ENCODE measurements at regions of chr5 and their contacts with region 1.

Region 1: GRCh38 chr5:83076742-83077661 is at the starts of genes TMEM167A and XRCC4:
- DNase-seq: peak; percentile 99
- ATAC-seq: peak; percentile 100
- H3K4me3 ChIP-seq: peak within 1 kb of the TSS; percentile 79
- H3K27ac ChIP-seq: peak within 1 kb of the TSS; percentile 88
- H3K4me1 ChIP-seq: peaks cover 3% of the 10 kb centered on the region; the same call in 1 of the 2 replicates
- H3K27me3 ChIP-seq: no peaks in the 10 kb centered on the region
- CTCF ChIP-seq: no peak
- POLR2A ChIP-seq: peak; percentile 95
- RAD21 ChIP-seq: no peak
- total RNA-seq, gene TMEM167A: 34.6 and 95.8 TPM in 2 replicates
- total RNA-seq, gene XRCC4: 4.7 and 11.7 TPM in 2 replicates

Region 2: GRCh38 chr5:82278095-82278918 is 798.7 kb before region 1 on chr5 and contains the start of gene RPS23:
- CTCF ChIA-PET with region 1: no interaction called
- POLR2A ChIA-PET with region 1: interaction called, 10 read pairs
- dilution Hi-C with region 1: no loop called
- in situ Hi-C with region 1: no loop called
- intact Hi-C with region 1: no loop called
- DNase-seq: peak; percentile 90
- ATAC-seq: peak; percentile 97
- H3K4me3 ChIP-seq: peak within 1 kb of the TSS; percentile 92
- H3K27ac ChIP-seq: peak within 1 kb of the TSS; percentile 71
- H3K4me1 ChIP-seq: no peaks in the 10 kb centered on the region
- H3K27me3 ChIP-seq: no peaks in the 10 kb centered on the region
- CTCF ChIP-seq: no peak
- POLR2A ChIP-seq: peak; percentile 97
- RAD21 ChIP-seq: no peak
- total RNA-seq, gene RPS23: 3,186 and 3,189 TPM in 2 replicates

Region 3: GRCh38 chr5:83306572-83307241 is 229.7 kb after region 1 on chr5:
- CTCF ChIA-PET with region 1: no interaction called
- POLR2A ChIA-PET with region 1: no interaction called
- dilution Hi-C with region 1: no loop called
- in situ Hi-C with region 1: no loop called
- intact Hi-C with region 1: loop called (anchors 5 kb)
- DNase-seq: peak; percentile 89
- ATAC-seq: peak; percentile 98
- H3K4me3 ChIP-seq: no peak overlapping the region
- H3K27ac ChIP-seq: no peak overlapping the region
- H3K4me1 ChIP-seq: no peaks in the 10 kb centered on the region
- H3K27me3 ChIP-seq: no peaks in the 10 kb centered on the region
- CTCF ChIP-seq: no peak
- POLR2A ChIP-seq: no peak
- RAD21 ChIP-seq: no peak

Region 4: GRCh38 chr5:83377131-83377865 is 300.3 kb after region 1 on chr5:
- CTCF ChIA-PET with region 1: interaction called, 3 read pairs
- POLR2A ChIA-PET with region 1: no interaction called
- dilution Hi-C with region 1: no loop called
- in situ Hi-C with region 1: no loop called
- intact Hi-C with region 1: loop called (anchors 1 kb)
- DNase-seq: peak; percentile 92
- ATAC-seq: peak; percentile 50
- H3K4me3 ChIP-seq: no peak overlapping the region
- H3K27ac ChIP-seq: peak overlapping the region; percentile 16; the same call in 1 of the 2 replicates
- H3K4me1 ChIP-seq: peaks cover 3% of the 10 kb centered on the region; the same call in 1 of the 2 replicates
- H3K27me3 ChIP-seq: no peaks in the 10 kb centered on the region
- CTCF ChIP-seq: no peak
- POLR2A ChIP-seq: no peak
- RAD21 ChIP-seq: no peak

Region 5: DNA sequence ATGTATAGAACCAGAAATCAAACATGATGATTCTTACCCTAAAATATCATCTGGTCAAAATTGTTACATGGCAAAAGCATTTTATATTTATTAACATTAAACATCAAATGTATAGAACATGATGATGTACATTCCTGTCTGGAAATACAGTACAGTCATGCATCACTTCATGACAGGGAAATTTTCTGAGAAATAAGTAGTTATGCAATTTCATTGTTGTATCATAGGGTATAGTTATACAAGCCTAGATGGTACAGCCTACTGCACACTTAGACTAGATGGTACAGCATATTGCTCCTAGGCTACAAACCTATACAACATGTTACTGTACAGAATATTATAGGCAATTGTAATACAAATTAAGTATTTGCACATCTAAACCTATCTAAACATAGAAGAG is 329.9 kb after region 1 on chr5:
- CTCF ChIA-PET with region 1: no interaction called
- POLR2A ChIA-PET with region 1: no interaction called
- dilution Hi-C with region 1: no loop called
- in situ Hi-C with region 1: no loop called
- intact Hi-C with region 1: no loop called
- DNase-seq: no peak
- ATAC-seq: no peak
- H3K4me3 ChIP-seq: no peak overlapping the region
- H3K27ac ChIP-seq: no peak overlapping the region
- H3K4me1 ChIP-seq: no peaks in the 10 kb centered on the region
- H3K27me3 ChIP-seq: no peaks in the 10 kb centered on the region
- CTCF ChIP-seq: no peak
- POLR2A ChIP-seq: no peak
- RAD21 ChIP-seq: no peak

Region 6: DNA sequence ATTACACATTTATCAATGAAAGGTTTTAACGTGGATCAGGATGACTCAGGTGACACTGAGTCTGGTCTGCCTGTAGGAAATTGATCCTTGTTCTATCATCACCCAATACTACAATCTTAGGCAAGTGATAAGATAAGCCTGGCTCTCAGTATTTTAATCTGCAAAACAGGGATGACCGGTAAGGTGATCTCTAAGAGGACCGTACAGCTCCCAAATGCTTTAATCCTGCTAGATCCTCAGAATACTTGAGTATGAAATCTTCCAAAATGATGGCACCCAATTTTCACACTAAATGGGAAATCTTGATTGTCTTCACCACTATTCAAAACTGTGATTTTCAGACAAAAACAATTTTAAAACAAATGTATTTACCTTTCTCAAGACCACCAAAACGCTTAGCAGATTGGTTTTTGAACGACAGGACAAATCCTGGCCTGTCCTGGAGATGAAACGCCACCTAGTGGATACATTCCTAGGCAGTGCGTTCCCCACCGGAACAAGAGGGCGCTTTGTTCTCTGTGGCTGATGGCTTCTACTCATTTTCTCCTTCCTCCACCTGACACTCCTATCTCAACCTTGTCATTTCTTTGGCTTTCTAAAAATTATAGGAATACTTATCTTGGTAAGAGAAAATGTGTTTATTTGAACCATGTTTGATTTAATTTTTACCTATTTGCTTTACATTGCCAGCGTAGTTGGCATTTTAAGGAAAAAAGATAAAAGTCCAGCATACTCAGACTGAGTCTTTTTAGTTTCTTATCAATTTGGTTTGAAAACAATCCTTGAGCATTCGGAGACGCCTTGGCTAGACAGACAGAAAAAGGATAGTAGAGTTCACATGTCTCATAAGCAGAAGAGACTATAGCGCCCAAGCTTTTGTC is 353.4 kb after region 1 on chr5:
- CTCF ChIA-PET with region 1: no interaction called
- POLR2A ChIA-PET with region 1: no interaction called
- dilution Hi-C with region 1: no loop called
- in situ Hi-C with region 1: no loop called
- intact Hi-C with region 1: loop called (anchors 2 kb)
- DNase-seq: peak; percentile 69
- ATAC-seq: peak; percentile 89
- H3K4me3 ChIP-seq: no peak overlapping the region
- H3K27ac ChIP-seq: no peak overlapping the region
- H3K4me1 ChIP-seq: no peaks in the 10 kb centered on the region
- H3K27me3 ChIP-seq: no peaks in the 10 kb centered on the region
- CTCF ChIP-seq: peak; percentile 93
- POLR2A ChIP-seq: no peak
- RAD21 ChIP-seq: peak; percentile 89

Region 7: GRCh38 chr5:83564069-83564749 is 487.2 kb after region 1 on chr5:
- CTCF ChIA-PET with region 1: interaction called, 5 read pairs
- POLR2A ChIA-PET with region 1: no interaction called
- dilution Hi-C with region 1: no loop called
- in situ Hi-C with region 1: loop called (anchors 25 kb)
- intact Hi-C with region 1: loop called (anchors 5 kb)
- DNase-seq: peak; percentile 63
- ATAC-seq: peak; percentile 56; the same call in 1 of the 2 replicates
- H3K4me3 ChIP-seq: no peak overlapping the region
- H3K27ac ChIP-seq: no peak overlapping the region
- H3K4me1 ChIP-seq: peaks cover 9% of the 10 kb centered on the region
- H3K27me3 ChIP-seq: no peaks in the 10 kb centered on the region
- CTCF ChIP-seq: peak; percentile 70
- POLR2A ChIP-seq: no peak
- RAD21 ChIP-seq: peak; percentile 75